CD4-positive, alpha-beta memory T cell (primary cell): ENCODE measurements at regions of chr7 and their contacts with region 1.

Region 1: GRCh38 chr7:115227473-115228235 is 305.8 kb downstream of the MDFIC start:
- DNase-seq: no peak
- H3K4me3 ChIP-seq: no peak overlapping the region
- H3K4me3 Mint-ChIP-seq: no peak overlapping the region
- H3K27ac ChIP-seq: no peak overlapping the region
- H3K27ac Mint-ChIP-seq: peak overlapping the region in 4 of 7 donors; percentile 13 to 82 (median 73)
- H3K4me1 ChIP-seq: peaks cover 43% of the 10 kb centered on the region
- H3K4me1 Mint-ChIP-seq: peaks cover 24 to 44% (median 37%) of the 10 kb centered on the region in 4 donors
- H3K27me3 ChIP-seq: no peaks in the 10 kb centered on the region
- H3K27me3 Mint-ChIP-seq: no peaks in the 10 kb centered on the region

Region 2: DNA sequence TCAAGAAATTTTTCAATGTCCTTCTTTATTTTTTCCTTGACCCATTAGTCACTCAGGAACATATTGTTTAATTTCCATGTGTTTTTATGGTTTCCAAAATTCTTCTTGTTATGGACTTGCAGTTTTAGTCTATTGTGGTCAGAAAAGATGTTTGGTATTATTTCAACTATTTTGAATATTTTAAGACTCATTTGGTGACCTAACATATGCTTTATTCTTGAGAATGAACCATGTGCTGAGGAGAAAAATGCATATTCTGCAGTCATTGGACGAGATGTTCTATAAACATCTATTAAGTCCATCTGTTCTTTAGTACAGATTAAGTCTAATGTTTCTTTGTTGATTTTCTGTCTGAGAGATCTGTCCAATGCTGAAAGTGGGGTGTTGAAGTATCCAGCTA is 348.1 kb before region 1 on chr7:
- CTCF ChIA-PET with region 1: no interaction called
- POLR2A ChIA-PET with region 1: no interaction called
- intact Hi-C with region 1: no loop called
- DNase-seq: no peak
- H3K4me3 ChIP-seq: no peak overlapping the region
- H3K4me3 Mint-ChIP-seq: no peak overlapping the region
- H3K27ac ChIP-seq: no peak overlapping the region
- H3K27ac Mint-ChIP-seq: peak overlapping the region in 1 of 7 donors; percentile 55
- H3K4me1 ChIP-seq: no peaks in the 10 kb centered on the region
- H3K4me1 Mint-ChIP-seq: peaks cover 0 to 4% (median 0%) of the 10 kb centered on the region in 4 donors
- H3K27me3 ChIP-seq: no peaks in the 10 kb centered on the region
- H3K27me3 Mint-ChIP-seq: no peaks in the 10 kb centered on the region

Region 3: GRCh38 chr7:115081772-115082171 is 145.9 kb before region 1 on chr7:
- CTCF ChIA-PET with region 1: no interaction called
- POLR2A ChIA-PET with region 1: no interaction called
- intact Hi-C with region 1: no loop called
- DNase-seq: no peak
- H3K4me3 ChIP-seq: no peak overlapping the region
- H3K4me3 Mint-ChIP-seq: no peak overlapping the region
- H3K27ac ChIP-seq: no peak overlapping the region
- H3K27ac Mint-ChIP-seq: no peak overlapping the region
- H3K4me1 ChIP-seq: no peaks in the 10 kb centered on the region
- H3K4me1 Mint-ChIP-seq: peaks cover 0 to 5% (median 3%) of the 10 kb centered on the region in 4 donors
- H3K27me3 ChIP-seq: no peaks in the 10 kb centered on the region
- H3K27me3 Mint-ChIP-seq: no peaks in the 10 kb centered on the region

Region 4: GRCh38 chr7:115217373-115217772 is 10.3 kb before region 1 on chr7:
- CTCF ChIA-PET with region 1: interaction called, 10 read pairs
- POLR2A ChIA-PET with region 1: interaction called, 6 read pairs
- intact Hi-C with region 1: no loop called
- DNase-seq: peak in 4 of 5 donors; percentile 22 to 29 (median 26)
- H3K4me3 ChIP-seq: no peak overlapping the region
- H3K4me3 Mint-ChIP-seq: no peak overlapping the region
- H3K27ac ChIP-seq: no peak overlapping the region
- H3K27ac Mint-ChIP-seq: peak overlapping the region in 1 of 7 donors; percentile 10
- H3K4me1 ChIP-seq: peaks cover 15% of the 10 kb centered on the region
- H3K4me1 Mint-ChIP-seq: peaks cover 12 to 18% (median 14%) of the 10 kb centered on the region in 4 donors
- H3K27me3 ChIP-seq: no peaks in the 10 kb centered on the region
- H3K27me3 Mint-ChIP-seq: peaks cover 0 to 2% of the 10 kb centered on the region in 2 donors